Activated CD4-positive, alpha-beta memory T cell treated with anti-CD3 and anti-CD28 coated beads for 36 hours (primary cell): ENCODE measurements at regions of chr15 and their contacts with region 1.

Region 1: GRCh38 chr15:81265944-81266775 is 57.8 kb downstream of the STARD5 start:
- DNase-seq: peak; percentile 90
- H3K4me3 Mint-ChIP-seq: peak overlapping the region; percentile 54
- H3K27ac Mint-ChIP-seq: no peak overlapping the region
- H3K4me1 Mint-ChIP-seq: peaks cover 18% of the 10 kb centered on the region
- H3K27me3 Mint-ChIP-seq: peaks cover 8% of the 10 kb centered on the region

Region 2: GRCh38 chr15:80776420-80777045 is 489.6 kb before region 1 on chr15:
- CTCF ChIA-PET with region 1: interaction called, 12 read pairs
- POLR2A ChIA-PET with region 1: no interaction called
- intact Hi-C with region 1: no loop called
- DNase-seq: peak; percentile 73
- H3K4me3 Mint-ChIP-seq: no peak overlapping the region
- H3K27ac Mint-ChIP-seq: no peak overlapping the region
- H3K4me1 Mint-ChIP-seq: peaks cover 11% of the 10 kb centered on the region
- H3K27me3 Mint-ChIP-seq: peaks cover 36% of the 10 kb centered on the region

Region 3: DNA sequence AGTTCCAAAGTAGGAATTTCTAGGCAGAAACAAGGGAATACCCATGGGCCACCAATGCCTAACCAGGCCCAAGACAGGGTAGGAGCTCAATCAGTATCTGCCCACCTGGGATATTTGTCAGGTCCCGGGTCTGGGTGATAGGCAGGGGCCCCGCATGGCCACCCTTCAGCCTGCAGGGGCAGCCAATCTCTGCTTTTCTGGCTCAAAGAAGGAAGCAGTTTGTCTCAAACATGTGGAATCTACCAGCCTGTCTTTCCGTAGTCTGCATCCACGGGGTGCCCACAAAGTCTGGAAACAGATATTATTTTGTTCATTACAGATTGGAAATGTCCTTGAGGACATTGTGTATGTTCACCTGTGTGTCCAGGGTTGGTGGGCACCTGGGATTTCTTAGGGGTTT is 430.8 kb before region 1 on chr15:
- CTCF ChIA-PET with region 1: no interaction called
- POLR2A ChIA-PET with region 1: no interaction called
- intact Hi-C with region 1: no loop called
- DNase-seq: no peak
- H3K4me3 Mint-ChIP-seq: no peak overlapping the region
- H3K27ac Mint-ChIP-seq: no peak overlapping the region
- H3K4me1 Mint-ChIP-seq: no peaks in the 10 kb centered on the region
- H3K27me3 Mint-ChIP-seq: peaks cover 9% of the 10 kb centered on the region

Region 4: GRCh38 chr15:81029414-81030300 is 236.5 kb before region 1 on chr15:
- CTCF ChIA-PET with region 1: interaction called, 14 read pairs
- POLR2A ChIA-PET with region 1: no interaction called
- intact Hi-C with region 1: no loop called
- DNase-seq: no peak
- H3K4me3 Mint-ChIP-seq: no peak overlapping the region
- H3K27ac Mint-ChIP-seq: no peak overlapping the region
- H3K4me1 Mint-ChIP-seq: peaks cover 27% of the 10 kb centered on the region
- H3K27me3 Mint-ChIP-seq: no peaks in the 10 kb centered on the region

Region 5: GRCh38 chr15:81146466-81146865 is 119.7 kb before region 1 on chr15:
- CTCF ChIA-PET with region 1: interaction called, 259 read pairs
- POLR2A ChIA-PET with region 1: no interaction called
- intact Hi-C with region 1: no loop called
- DNase-seq: no peak
- H3K4me3 Mint-ChIP-seq: no peak overlapping the region
- H3K27ac Mint-ChIP-seq: no peak overlapping the region
- H3K4me1 Mint-ChIP-seq: no peaks in the 10 kb centered on the region
- H3K27me3 Mint-ChIP-seq: peaks cover 13% of the 10 kb centered on the region

Region 6: DNA sequence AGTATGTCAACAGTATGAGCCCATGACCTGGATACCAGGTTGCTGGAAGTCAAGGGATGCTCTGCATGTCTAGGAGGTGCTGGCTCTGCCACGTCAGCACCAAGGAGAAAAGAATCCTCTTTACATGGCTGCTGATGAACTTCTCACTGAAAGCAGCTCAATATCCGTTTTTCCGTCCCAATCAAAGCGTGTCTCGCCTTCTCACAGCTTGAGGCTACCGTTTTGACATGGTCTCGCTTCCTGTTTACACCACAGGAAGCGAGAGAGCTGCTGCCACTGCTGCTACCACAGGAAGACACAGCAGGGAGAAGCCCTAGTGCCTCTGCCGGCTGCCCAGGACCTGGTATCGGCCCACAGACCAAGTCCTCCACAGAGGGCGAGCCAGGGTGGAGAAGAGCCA is 30.5 kb after region 1 on chr15:
- CTCF ChIA-PET with region 1: interaction called, 54 read pairs
- POLR2A ChIA-PET with region 1: no interaction called
- intact Hi-C with region 1: no loop called
- DNase-seq: peak; percentile 89
- H3K4me3 Mint-ChIP-seq: peak overlapping the region; percentile 99
- H3K27ac Mint-ChIP-seq: peak overlapping the region; percentile 99
- H3K4me1 Mint-ChIP-seq: peaks cover 80% of the 10 kb centered on the region
- H3K27me3 Mint-ChIP-seq: no peaks in the 10 kb centered on the region

Region 7: GRCh38 chr15:81336568-81336967 is 70.4 kb after region 1 on chr15:
- CTCF ChIA-PET with region 1: interaction called, 37 read pairs
- POLR2A ChIA-PET with region 1: no interaction called
- intact Hi-C with region 1: no loop called
- DNase-seq: peak; percentile 51
- H3K4me3 Mint-ChIP-seq: no peak overlapping the region
- H3K27ac Mint-ChIP-seq: no peak overlapping the region
- H3K4me1 Mint-ChIP-seq: peaks cover 8% of the 10 kb centered on the region
- H3K27me3 Mint-ChIP-seq: no peaks in the 10 kb centered on the region

Region 8: GRCh38 chr15:81410318-81410753 is 144.2 kb after region 1 on chr15:
- CTCF ChIA-PET with region 1: interaction called, 14 read pairs
- POLR2A ChIA-PET with region 1: interaction called, 4 read pairs
- intact Hi-C with region 1: no loop called
- DNase-seq: peak; percentile 11
- H3K4me3 Mint-ChIP-seq: no peak overlapping the region
- H3K27ac Mint-ChIP-seq: no peak overlapping the region
- H3K4me1 Mint-ChIP-seq: peaks cover 9% of the 10 kb centered on the region
- H3K27me3 Mint-ChIP-seq: peaks cover 20% of the 10 kb centered on the region

Region 9: GRCh38 chr15:81789403-81789802 is 523.2 kb after region 1 on chr15:
- CTCF ChIA-PET with region 1: no interaction called
- POLR2A ChIA-PET with region 1: no interaction called
- intact Hi-C with region 1: no loop called
- DNase-seq: no peak
- H3K4me3 Mint-ChIP-seq: no peak overlapping the region
- H3K27ac Mint-ChIP-seq: no peak overlapping the region
- H3K4me1 Mint-ChIP-seq: no peaks in the 10 kb centered on the region
- H3K27me3 Mint-ChIP-seq: peaks cover 7% of the 10 kb centered on the region